Heart left ventricle (tissue), 16 donors: ENCODE measurements at regions of chr2 and their contacts with region 1.

Region 1: DNA sequence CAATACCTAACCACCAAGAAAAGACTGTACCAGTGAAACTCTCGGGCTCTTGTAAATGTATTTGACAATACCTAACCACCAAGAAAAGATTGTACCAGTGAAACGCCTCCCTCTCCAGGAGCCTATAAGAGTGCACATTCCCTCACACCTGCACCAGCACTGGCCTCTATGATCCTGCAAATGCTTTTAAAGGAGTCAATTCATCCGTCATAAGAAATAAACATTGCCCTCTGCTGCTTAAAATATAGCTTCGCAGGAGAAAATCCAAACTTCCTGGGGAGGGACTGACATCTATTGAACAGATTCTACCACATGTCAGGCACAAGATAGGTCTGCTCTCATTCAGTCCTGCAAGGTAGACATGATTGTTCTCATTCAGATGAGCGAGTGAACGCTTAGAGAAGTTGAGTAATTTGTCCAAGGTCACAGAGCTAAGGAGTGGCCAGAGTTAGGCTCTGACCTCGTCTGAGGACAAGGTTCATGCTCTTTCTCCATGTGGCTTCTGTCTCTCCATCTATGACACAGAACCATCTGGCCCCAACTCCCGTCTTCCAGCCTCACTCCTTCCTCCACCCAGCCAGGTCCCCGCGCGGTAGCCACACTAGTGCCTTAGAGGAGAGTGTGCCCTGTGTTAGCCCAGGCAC is 38.7 kb downstream of the MCFD2 start:
- DNase-seq: peak in 3 of 5 donors; percentile 52 to 68 (median 65)
- ATAC-seq: peak; percentile 35 to 45 (median 42)
- H3K4me3 ChIP-seq: no peak overlapping the region
- H3K27ac ChIP-seq: peak overlapping the region in 9 of 12 donors; percentile 33 to 77 (median 49)
- H3K4me1 ChIP-seq: peaks cover 4 to 67% (median 52%) of the 10 kb centered on the region in 12 donors
- H3K27me3 ChIP-seq: no peaks in the 10 kb centered on the region
- CTCF ChIP-seq: peak; percentile 33 to 79 (median 66)
- POLR2A ChIP-seq: no peak

Region 2: DNA sequence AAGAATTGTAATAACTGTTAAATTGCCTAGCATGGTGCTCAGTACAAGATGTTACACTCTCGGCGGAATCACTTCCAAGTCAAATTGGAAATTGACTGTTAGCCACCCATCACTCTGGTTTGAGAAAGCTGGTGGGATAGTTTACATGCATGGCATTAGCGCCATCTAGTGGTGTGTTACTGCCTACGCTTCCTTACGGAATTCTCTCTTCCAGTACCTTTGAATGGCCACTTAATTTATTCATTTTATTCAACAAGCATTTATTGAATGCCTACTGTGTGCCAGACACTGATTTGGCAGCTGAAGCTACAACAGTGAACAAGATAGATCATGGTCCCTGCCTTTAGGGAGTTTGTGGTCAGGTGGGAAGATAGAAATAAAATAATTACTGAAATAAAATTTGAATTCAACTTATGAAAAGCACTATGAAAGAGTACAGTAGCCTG is 226.3 kb before region 1 on chr2:
- intact Hi-C with region 1: loop called in 2 of 10 experiments (anchors 5 kb)
- DNase-seq: peak in 4 of 5 donors; percentile 57 to 70 (median 64)
- ATAC-seq: peak in 3 of 4 donors; percentile 68 to 80 (median 75)
- H3K4me3 ChIP-seq: no peak overlapping the region
- H3K27ac ChIP-seq: no peak overlapping the region
- H3K4me1 ChIP-seq: peaks cover 0 to 11% (median 6%) of the 10 kb centered on the region in 12 donors
- H3K27me3 ChIP-seq: no peaks in the 10 kb centered on the region
- CTCF ChIP-seq: peak; percentile 86 to 99 (median 96)
- POLR2A ChIP-seq: no peak

Region 3: DNA sequence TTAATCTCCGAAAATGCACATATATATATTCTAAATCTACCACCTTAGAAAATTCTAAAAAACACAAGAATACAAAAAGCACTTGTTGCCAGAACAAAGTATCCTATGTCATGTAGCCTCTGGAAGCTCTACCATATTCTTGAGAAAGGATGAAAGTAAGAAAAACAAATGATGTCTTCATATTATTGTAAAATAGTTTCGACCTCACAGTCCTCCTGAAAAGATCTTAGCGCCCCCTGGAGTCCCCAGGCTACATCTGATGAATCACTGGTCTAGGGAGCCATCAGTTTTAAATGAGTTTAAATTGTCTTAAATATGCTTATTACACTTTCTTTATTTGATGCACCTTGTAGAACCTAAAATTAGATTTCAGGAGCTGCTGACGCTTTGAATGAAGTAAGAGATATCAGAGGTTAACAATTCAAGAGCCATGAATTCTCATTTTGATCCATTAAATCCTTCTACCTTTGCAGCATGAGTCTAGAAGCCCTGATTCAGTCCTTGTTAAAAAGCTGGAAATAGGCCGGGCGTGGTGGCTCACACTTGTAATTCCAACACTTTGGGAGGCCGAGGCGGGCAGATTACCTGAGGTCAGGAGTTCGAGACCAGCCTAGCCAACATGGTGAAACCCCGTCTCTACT is 100.1 kb before region 1 on chr2:
- intact Hi-C with region 1: loop called in 1 of 10 experiments (anchors 5 kb)
- DNase-seq: peak in 3 of 5 donors; percentile 35 to 54 (median 43)
- ATAC-seq: no peak
- H3K4me3 ChIP-seq: no peak overlapping the region
- H3K27ac ChIP-seq: no peak overlapping the region
- H3K4me1 ChIP-seq: peaks cover 0 to 38% (median 28%) of the 10 kb centered on the region in 12 donors
- H3K27me3 ChIP-seq: no peaks in the 10 kb centered on the region
- CTCF ChIP-seq: peak; percentile 43 to 76 (median 62)
- POLR2A ChIP-seq: no peak

Region 4: DNA sequence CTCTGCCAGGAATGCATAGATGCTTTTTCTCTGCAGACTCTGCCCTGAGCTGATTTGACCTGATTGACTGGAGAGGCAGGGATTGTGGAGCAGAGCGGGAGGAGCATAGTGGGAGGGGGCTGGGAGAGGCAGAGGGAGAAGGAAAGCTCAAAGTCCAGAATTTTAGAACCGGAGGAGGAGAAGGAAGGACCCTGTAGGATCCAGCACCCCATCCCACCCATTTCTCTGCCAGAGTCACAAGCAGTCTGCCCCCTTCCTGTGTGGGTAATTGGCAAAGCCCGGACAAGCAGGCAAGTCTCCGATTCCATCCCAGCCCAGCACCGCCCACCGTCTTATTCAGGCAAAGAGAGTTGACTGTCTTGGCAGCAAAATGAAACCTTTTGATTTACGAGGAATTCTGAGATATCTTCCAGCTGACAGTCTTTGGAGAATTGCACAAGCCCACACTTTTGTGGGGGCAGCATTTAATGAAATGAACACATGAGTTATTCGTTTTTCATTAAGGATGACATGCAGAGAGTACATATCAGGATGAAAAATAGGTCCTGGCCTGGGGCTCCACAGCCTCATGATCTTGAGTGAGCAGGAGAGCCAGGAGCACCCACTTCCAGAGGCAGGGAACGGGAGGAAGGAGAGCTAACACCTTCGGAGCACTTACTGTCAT is 64.4 kb before region 1 on chr2:
- intact Hi-C with region 1: loop called in 6 of 10 experiments (anchors 2 to 5 kb)
- DNase-seq: peak; percentile 71 to 83 (median 80)
- ATAC-seq: peak; percentile 19 to 44 (median 35)
- H3K4me3 ChIP-seq: peak overlapping the region in 3 of 12 donors; percentile 13 to 20 (median 14)
- H3K27ac ChIP-seq: peak overlapping the region in 11 of 12 donors; percentile 81 to 96 (median 88)
- H3K4me1 ChIP-seq: peaks cover 16 to 65% (median 47%) of the 10 kb centered on the region in 12 donors
- H3K27me3 ChIP-seq: no peaks in the 10 kb centered on the region
- CTCF ChIP-seq: no peak
- POLR2A ChIP-seq: no peak

Region 5: GRCh38 chr2:46854261-46854660 is 22.6 kb before region 1 on chr2:
- intact Hi-C with region 1: loop called in 1 of 10 experiments (anchors 2 kb)
- DNase-seq: peak in 2 of 5 donors; percentile 48 to 67
- ATAC-seq: peak; percentile 7 to 65 (median 29)
- H3K4me3 ChIP-seq: no peak overlapping the region
- H3K27ac ChIP-seq: peak overlapping the region; percentile 71 to 92 (median 88)
- H3K4me1 ChIP-seq: peaks cover 10 to 49% (median 36%) of the 10 kb centered on the region in 12 donors
- H3K27me3 ChIP-seq: no peaks in the 10 kb centered on the region
- CTCF ChIP-seq: no peak
- POLR2A ChIP-seq: no peak